H1 (cell line): ENCODE measurements at regions of chr17 and their contacts with region 1.

Region 1: GRCh38 chr17:19004421-19005136 is at the start of gene FAM83G:
- DNase-seq: peak; percentile 47 to 85
- H3K4me3 ChIP-seq: peak within 1 kb of the TSS; percentile 54 to 92 (median 82)
- H3K27ac ChIP-seq: peak within 1 kb of the TSS; percentile 75; the same call in 1 of the 2 replicates
- H3K4me1 ChIP-seq: peaks cover 0 to 23% (median 18%) of the 10 kb centered on the region in 4 experiments; a peak in 6 of 7 replicates
- H3K27me3 ChIP-seq: no peaks in the 10 kb centered on the region
- CTCF ChIP-seq: no peak
- EP300 ChIP-seq: no peak
- POLR2A ChIP-seq: no peak; a peak in 1 of 3 replicates
- RAD21 ChIP-seq: no peak
- total RNA-seq, gene FAM83G: 28.7 and 29.0 TPM in 2 replicates

Region 2: GRCh38 chr17:18992454-18993130 is 12.0 kb before region 1 on chr17:
- CTCF ChIA-PET with region 1: interaction called, 3 read pairs
- POLR2A ChIA-PET with region 1: interaction called, 21 read pairs
- DNase-seq: no peak
- H3K4me3 ChIP-seq: no peak overlapping the region
- H3K27ac ChIP-seq: no peak overlapping the region; the same call in 1 of the 2 replicates
- H3K4me1 ChIP-seq: no peaks in the 10 kb centered on the region
- H3K27me3 ChIP-seq: no peaks in the 10 kb centered on the region
- CTCF ChIP-seq: no peak
- EP300 ChIP-seq: no peak
- POLR2A ChIP-seq: no peak
- RAD21 ChIP-seq: no peak